ENCODE measurements at regions of chr2 and their contacts with region 1.

Region 1: GRCh38 chr2:231110551-231110950 is 14.3 kb downstream of the HTR2B start:
- DNase-seq: no peak
- H3K4me3 ChIP-seq: no peak overlapping the region
- H3K27ac ChIP-seq: no peak overlapping the region
- H3K4me1 ChIP-seq: no peaks in the 10 kb centered on the region
- H3K27me3 ChIP-seq: no peaks in the 10 kb centered on the region
- CTCF ChIP-seq: no peak

Region 2: GRCh38 chr2:230885463-230886130 is 225.0 kb before region 1 on chr2:
- CTCF ChIA-PET with region 1: no interaction called
- dilution Hi-C with region 1: no loop called
- in situ Hi-C with region 1: no loop called
- intact Hi-C with region 1: no loop called
- DNase-seq: no peak
- H3K4me3 ChIP-seq: no peak overlapping the region
- H3K27ac ChIP-seq: no peak overlapping the region
- H3K4me1 ChIP-seq: no peaks in the 10 kb centered on the region
- H3K27me3 ChIP-seq: no peaks in the 10 kb centered on the region
- CTCF ChIP-seq: no peak

Region 3: DNA sequence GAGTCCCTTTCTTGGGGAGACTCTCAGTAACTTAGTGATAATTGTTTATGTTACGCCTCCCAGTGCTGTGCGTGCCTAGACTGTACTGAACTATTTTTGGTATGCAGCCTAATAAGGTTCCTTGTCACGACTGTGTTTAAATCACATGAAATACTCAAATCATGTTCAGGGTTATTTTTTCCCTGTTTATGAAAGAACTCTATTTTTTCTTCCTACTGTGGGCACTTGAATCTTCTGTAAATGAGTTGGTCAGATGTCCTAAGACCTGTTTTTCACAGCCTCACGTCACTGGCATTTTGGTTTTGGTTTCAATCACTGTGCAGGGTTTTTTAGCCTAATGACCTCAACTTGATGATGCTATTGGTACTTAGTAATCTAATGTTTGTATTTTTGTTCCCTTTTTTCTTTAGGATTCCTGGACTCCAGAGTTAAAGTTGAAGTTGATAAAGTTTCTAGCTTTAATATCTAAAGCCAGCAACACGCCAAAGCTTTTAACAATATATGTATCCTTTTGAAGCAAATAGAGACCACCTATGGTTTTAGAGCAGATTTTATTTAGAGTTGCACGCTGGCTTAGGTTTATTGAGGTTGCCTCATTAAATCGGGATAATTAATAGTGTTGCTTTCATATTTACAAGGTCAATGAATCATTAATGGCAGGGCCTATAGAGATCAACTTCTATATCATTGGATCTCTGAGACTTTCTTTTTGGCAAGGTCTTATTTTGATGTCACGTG is 111.9 kb after region 1 on chr2:
- CTCF ChIA-PET with region 1: interaction called, 26 read pairs
- dilution Hi-C with region 1: no loop called
- in situ Hi-C with region 1: no loop called
- intact Hi-C with region 1: no loop called
- DNase-seq: no peak
- H3K4me3 ChIP-seq: no peak overlapping the region
- H3K27ac ChIP-seq: peak overlapping the region; percentile 52
- H3K4me1 ChIP-seq: peaks cover 6% of the 10 kb centered on the region
- H3K27me3 ChIP-seq: no peaks in the 10 kb centered on the region
- CTCF ChIP-seq: no peak

Measured in mammary epithelial cell (primary cell).